Naive thymus-derived CD4-positive, alpha-beta T cell (primary cell): ENCODE measurements at regions of chr17 and their contacts with region 1.

Region 1: DNA sequence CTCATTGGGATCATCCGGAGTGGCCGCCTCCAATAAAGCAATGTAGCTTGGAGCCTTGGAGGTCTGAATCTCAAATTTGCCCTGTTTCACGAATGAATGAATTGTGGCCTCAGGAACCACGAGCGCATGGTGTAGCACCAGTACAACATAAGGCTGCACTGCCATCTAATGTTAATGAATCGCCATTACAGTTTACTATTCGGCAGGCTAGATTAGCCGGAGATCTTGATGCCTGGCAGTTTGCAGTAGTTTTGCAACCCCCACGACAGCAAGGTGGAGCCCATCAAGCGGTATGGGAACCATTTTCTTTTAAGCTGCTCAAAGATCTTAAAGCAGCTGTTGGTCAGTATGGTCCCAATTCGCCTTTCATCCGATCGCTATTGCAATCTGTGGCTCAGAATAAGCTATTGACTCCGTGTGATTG is 18.8 kb downstream of the ALOX15B start:
- DNase-seq: peak in 7 of 9 donors; percentile 49 to 73 (median 64)
- ATAC-seq: peak; percentile 90
- H3K4me3 ChIP-seq: no peak overlapping the region
- H3K4me3 Mint-ChIP-seq: no peak overlapping the region
- H3K27ac ChIP-seq: no peak overlapping the region
- H3K27ac Mint-ChIP-seq: no peak overlapping the region
- H3K4me1 ChIP-seq: no peaks in the 10 kb centered on the region
- H3K4me1 Mint-ChIP-seq: peaks cover 0 to 20% (median 6%) of the 10 kb centered on the region in 7 donors
- H3K27me3 ChIP-seq: peaks cover 0 to 4% of the 10 kb centered on the region in 2 donors
- H3K27me3 Mint-ChIP-seq: peaks cover 34 to 62% (median 44%) of the 10 kb centered on the region in 5 donors

Region 2: GRCh38 chr17:7745748-7746470 is 311.8 kb before region 1 on chr17:
- CTCF ChIA-PET with region 1: interaction called, 7 read pairs
- POLR2A ChIA-PET with region 1: no interaction called
- intact Hi-C with region 1: loop called in 1 of 2 experiments (anchors 1 kb)
- DNase-seq: no peak
- ATAC-seq: no peak
- H3K4me3 ChIP-seq: no peak overlapping the region
- H3K4me3 Mint-ChIP-seq: no peak overlapping the region
- H3K27ac ChIP-seq: no peak overlapping the region
- H3K27ac Mint-ChIP-seq: no peak overlapping the region
- H3K4me1 ChIP-seq: no peaks in the 10 kb centered on the region
- H3K4me1 Mint-ChIP-seq: peaks cover 0 to 2% (median 0%) of the 10 kb centered on the region in 7 donors
- H3K27me3 ChIP-seq: no peaks in the 10 kb centered on the region
- H3K27me3 Mint-ChIP-seq: peaks cover 2 to 18% (median 10%) of the 10 kb centered on the region in 5 donors

Region 3: GRCh38 chr17:7903154-7904103 is 154.3 kb before region 1 on chr17:
- CTCF ChIA-PET with region 1: no interaction called
- POLR2A ChIA-PET with region 1: no interaction called
- intact Hi-C with region 1: no loop called
- DNase-seq: no peak
- ATAC-seq: no peak
- H3K4me3 ChIP-seq: no peak overlapping the region
- H3K4me3 Mint-ChIP-seq: no peak overlapping the region
- H3K27ac ChIP-seq: no peak overlapping the region
- H3K27ac Mint-ChIP-seq: peak overlapping the region in 8 of 9 donors; percentile 5 to 90 (median 56)
- H3K4me1 ChIP-seq: no peaks in the 10 kb centered on the region
- H3K4me1 Mint-ChIP-seq: peaks cover 0 to 10% (median 0%) of the 10 kb centered on the region in 7 donors
- H3K27me3 ChIP-seq: no peaks in the 10 kb centered on the region
- H3K27me3 Mint-ChIP-seq: no peaks in the 10 kb centered on the region

Region 4: GRCh38 chr17:7915611-7916382 is 141.9 kb before region 1 on chr17 and contains the start of gene RNF227:
- CTCF ChIA-PET with region 1: no interaction called
- POLR2A ChIA-PET with region 1: no interaction called
- intact Hi-C with region 1: loop called (anchors 1 to 5 kb)
- DNase-seq: peak; percentile 74 to 90 (median 83)
- ATAC-seq: peak; percentile 88
- H3K4me3 ChIP-seq: peak within 1 kb of the TSS; percentile 91
- H3K4me3 Mint-ChIP-seq: peak within 1 kb of the TSS; percentile 64 to 98 (median 88)
- H3K27ac ChIP-seq: peak within 1 kb of the TSS; percentile 75
- H3K27ac Mint-ChIP-seq: peak within 1 kb of the TSS; percentile 82 to 95 (median 92)
- H3K4me1 ChIP-seq: peaks cover 20 to 22% of the 10 kb centered on the region in 2 donors
- H3K4me1 Mint-ChIP-seq: peaks cover 22 to 37% (median 35%) of the 10 kb centered on the region in 7 donors
- H3K27me3 ChIP-seq: no peaks in the 10 kb centered on the region
- H3K27me3 Mint-ChIP-seq: no peaks in the 10 kb centered on the region
- total RNA-seq, gene RNF227: 2.6 to 8.2 (median 5.5) TPM

Region 5: GRCh38 chr17:8041249-8041928 is 16.3 kb before region 1 on chr17:
- CTCF ChIA-PET with region 1: interaction called, 12 read pairs
- POLR2A ChIA-PET with region 1: interaction called, 3 read pairs
- intact Hi-C with region 1: no loop called
- DNase-seq: peak in 7 of 9 donors; percentile 18 to 56 (median 47)
- ATAC-seq: peak; percentile 69
- H3K4me3 ChIP-seq: no peak overlapping the region
- H3K4me3 Mint-ChIP-seq: no peak overlapping the region
- H3K27ac ChIP-seq: no peak overlapping the region
- H3K27ac Mint-ChIP-seq: no peak overlapping the region
- H3K4me1 ChIP-seq: no peaks in the 10 kb centered on the region
- H3K4me1 Mint-ChIP-seq: peaks cover 0 to 16% (median 0%) of the 10 kb centered on the region in 7 donors
- H3K27me3 ChIP-seq: peaks cover 0 to 13% of the 10 kb centered on the region in 2 donors
- H3K27me3 Mint-ChIP-seq: peaks cover 18 to 30% (median 23%) of the 10 kb centered on the region in 5 donors

Region 6: GRCh38 chr17:8091033-8091687 is 33.5 kb after region 1 on chr17:
- CTCF ChIA-PET with region 1: interaction called, 5 read pairs
- POLR2A ChIA-PET with region 1: interaction called, 4 read pairs
- intact Hi-C with region 1: loop called in 1 of 2 experiments (anchors 1 kb)
- DNase-seq: no peak
- ATAC-seq: no peak
- H3K4me3 ChIP-seq: no peak overlapping the region
- H3K4me3 Mint-ChIP-seq: no peak overlapping the region
- H3K27ac ChIP-seq: no peak overlapping the region
- H3K27ac Mint-ChIP-seq: no peak overlapping the region
- H3K4me1 ChIP-seq: peaks cover 5 to 13% of the 10 kb centered on the region in 2 donors
- H3K4me1 Mint-ChIP-seq: peaks cover 6 to 17% (median 15%) of the 10 kb centered on the region in 7 donors
- H3K27me3 ChIP-seq: peaks cover 0 to 5% of the 10 kb centered on the region in 2 donors
- H3K27me3 Mint-ChIP-seq: peaks cover 4 to 49% (median 21%) of the 10 kb centered on the region in 5 donors

Region 7: GRCh38 chr17:8785547-8786413 is 728.1 kb after region 1 on chr17:
- CTCF ChIA-PET with region 1: interaction called, 13 read pairs
- POLR2A ChIA-PET with region 1: no interaction called
- intact Hi-C with region 1: loop called in 1 of 2 experiments (anchors 1 kb)
- DNase-seq: peak; percentile 18 to 60 (median 45)
- ATAC-seq: peak; percentile 62
- H3K4me3 ChIP-seq: no peak overlapping the region
- H3K4me3 Mint-ChIP-seq: no peak overlapping the region
- H3K27ac ChIP-seq: no peak overlapping the region
- H3K27ac Mint-ChIP-seq: no peak overlapping the region
- H3K4me1 ChIP-seq: no peaks in the 10 kb centered on the region
- H3K4me1 Mint-ChIP-seq: peaks cover 0 to 4% (median 0%) of the 10 kb centered on the region in 7 donors
- H3K27me3 ChIP-seq: no peaks in the 10 kb centered on the region
- H3K27me3 Mint-ChIP-seq: peaks cover 0 to 18% (median 0%) of the 10 kb centered on the region in 5 donors